ENCODE measurements at regions of chr3 and their contacts with region 1.

Region 1: GRCh38 chr3:194615226-194615625 is 18.0 kb downstream of the TMEM44 start:
- DNase-seq: no peak
- ATAC-seq: 0 out of 6 replicates have a peak, but pooled peaks of 1 of the 2 experiments have one; percentile 13
- H3K4me3 ChIP-seq: no peak overlapping the region
- H3K27ac ChIP-seq: no peak overlapping the region
- H3K4me1 ChIP-seq: no peaks in the 10 kb centered on the region
- CTCF ChIP-seq: no peak
- EP300 ChIP-seq: no peak
- POLR2A ChIP-seq: no peak
- RAD21 ChIP-seq: no peak

Region 2: DNA sequence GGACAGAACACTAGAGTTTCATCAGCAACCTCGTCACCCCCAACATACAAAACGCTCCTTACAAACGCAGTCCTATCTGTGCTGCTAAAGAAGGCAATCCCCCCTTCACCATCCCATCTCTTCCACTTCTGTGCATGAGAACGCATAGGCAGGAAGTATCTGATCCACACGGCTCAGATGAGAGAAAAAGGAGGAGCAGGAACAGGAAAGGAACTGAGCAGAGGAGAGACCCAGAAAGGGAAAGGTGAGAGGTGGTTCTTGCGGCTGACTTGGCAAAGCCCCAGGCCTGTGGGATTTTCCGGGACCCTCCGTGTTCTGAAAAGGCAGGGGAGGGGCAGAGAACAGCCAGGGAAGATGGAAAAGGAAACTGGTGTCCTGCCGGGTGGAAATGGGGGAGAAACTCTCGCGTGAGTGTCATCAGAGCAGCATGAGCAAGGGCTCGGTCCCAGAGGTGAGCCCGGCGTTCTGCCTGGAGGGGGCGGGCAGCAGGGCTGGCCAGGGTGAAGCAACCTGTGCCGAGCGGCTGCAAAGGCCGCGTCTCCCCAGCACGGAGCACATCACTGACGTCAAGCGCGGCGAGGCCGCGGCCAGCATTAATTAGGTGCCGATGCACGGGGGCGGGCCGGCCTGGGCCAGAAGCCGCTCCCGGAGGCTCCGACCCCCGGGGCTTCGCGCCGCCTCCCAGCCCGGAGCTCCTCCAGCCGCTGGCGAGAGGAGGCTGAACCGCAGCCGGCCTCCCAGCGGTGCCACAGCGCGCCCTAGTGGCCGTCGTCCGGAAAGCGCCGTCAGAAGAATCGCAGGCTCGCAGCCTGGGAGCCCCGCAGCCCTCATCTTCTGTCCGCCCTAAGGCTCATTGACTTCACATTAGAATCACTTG is 299.9 kb before region 1 on chr3:
- CTCF ChIA-PET with region 1: no interaction called
- POLR2A ChIA-PET with region 1: no interaction called
- DNase-seq: peak; percentile 72 to 86
- ATAC-seq: peak; percentile 86 to 89
- H3K4me3 ChIP-seq: peak overlapping the region; percentile 43
- H3K27ac ChIP-seq: peak overlapping the region; percentile 78 to 88
- H3K4me1 ChIP-seq: peaks cover 56% of the 10 kb centered on the region
- CTCF ChIP-seq: peak; percentile 82
- EP300 ChIP-seq: peak in 1 of 2 experiments; percentile 54; a peak in 1 of 5 replicates
- POLR2A ChIP-seq: no peak
- RAD21 ChIP-seq: peak; percentile 86 to 97

Region 3: DNA sequence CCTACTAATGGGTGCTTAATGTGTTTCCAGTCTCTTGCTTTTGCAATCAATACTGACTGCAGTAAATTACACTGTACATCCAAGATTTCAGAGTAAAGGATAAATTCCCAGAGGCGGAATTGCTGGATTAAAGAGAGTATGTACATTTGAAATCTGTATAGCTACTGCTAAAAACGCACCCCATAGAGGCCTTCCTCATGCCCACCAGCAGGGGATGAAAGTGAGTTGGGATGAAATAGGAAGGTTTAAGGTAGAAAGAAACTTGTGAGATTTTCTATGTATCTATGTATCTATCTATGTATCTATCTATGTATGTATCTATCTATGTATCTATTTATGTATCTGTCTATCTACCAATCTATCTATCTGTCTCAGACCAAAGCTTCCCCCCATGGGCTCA is 10.4 kb before region 1 on chr3:
- CTCF ChIA-PET with region 1: interaction called, 10 read pairs
- POLR2A ChIA-PET with region 1: no interaction called
- DNase-seq: no peak
- ATAC-seq: peak; percentile 51 to 65; a peak in 4 of 6 replicates
- H3K4me3 ChIP-seq: no peak overlapping the region
- H3K27ac ChIP-seq: no peak overlapping the region
- H3K4me1 ChIP-seq: peaks cover 11% of the 10 kb centered on the region; the same call in 2 of the 3 replicates
- CTCF ChIP-seq: peak; percentile 24; the same call in 2 of the 3 replicates
- EP300 ChIP-seq: no peak
- POLR2A ChIP-seq: no peak
- RAD21 ChIP-seq: peak in 1 of 2 experiments; percentile 29; a peak in 1 of 5 replicates

Measured in A549 (cell line).